ENCODE measurements at regions of chr17 and their contacts with region 1.

Region 1: GRCh38 chr17:76515274-76515949 is 14.2 kb upstream of the RHBDF2 start:
- DNase-seq: no peak

Region 2: GRCh38 chr17:76529224-76530094 is 14.0 kb after region 1 on chr17:
- intact Hi-C with region 1: loop called (anchors 1 kb)
- DNase-seq: peak; percentile 88

Measured in cardiac septum (tissue), 1 donor.